K562 (cell line): ENCODE measurements at regions of chr5 and their contacts with region 1.

Region 1: DNA sequence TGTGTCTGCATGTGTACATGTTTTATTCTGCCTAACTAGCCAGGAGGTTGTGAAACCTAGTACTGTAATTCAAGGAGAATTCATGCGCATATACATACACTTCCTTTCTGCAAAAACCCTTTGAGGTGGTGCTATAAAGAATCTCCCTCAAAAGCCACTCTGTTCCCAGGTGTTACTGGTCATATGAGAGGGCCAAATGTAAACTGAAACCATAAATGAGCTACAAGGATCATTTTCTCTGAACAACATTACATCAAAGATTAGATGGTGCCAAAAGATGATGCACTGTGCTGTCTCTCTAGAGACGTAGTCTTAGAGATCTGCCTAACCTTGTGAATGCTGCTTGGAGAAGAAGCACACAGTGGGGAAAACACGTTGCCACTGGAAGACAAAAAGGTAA is 15.7 kb downstream of the NREP start:
- DNase-seq: no peak
- ATAC-seq: no peak
- H3K4me3 ChIP-seq: no peak overlapping the region
- H3K27ac ChIP-seq: no peak overlapping the region
- H3K4me1 ChIP-seq: no peaks in the 10 kb centered on the region
- H3K27me3 ChIP-seq: no peaks in the 10 kb centered on the region
- CTCF ChIP-seq: no peak
- EP300 ChIP-seq: no peak
- POLR2A ChIP-seq: no peak
- RAD21 ChIP-seq: no peak

Region 2: GRCh38 chr5:110909950-110910349 is 831.3 kb before region 1 on chr5:
- CTCF ChIA-PET with region 1: no interaction called
- POLR2A ChIA-PET with region 1: no interaction called
- in situ Hi-C with region 1: no loop called
- intact Hi-C with region 1: no loop called
- DNase-seq: no peak
- ATAC-seq: no peak
- H3K4me3 ChIP-seq: no peak overlapping the region
- H3K27ac ChIP-seq: no peak overlapping the region
- H3K4me1 ChIP-seq: no peaks in the 10 kb centered on the region
- H3K27me3 ChIP-seq: no peaks in the 10 kb centered on the region
- CTCF ChIP-seq: no peak
- EP300 ChIP-seq: no peak
- POLR2A ChIP-seq: no peak
- RAD21 ChIP-seq: no peak

Region 3: DNA sequence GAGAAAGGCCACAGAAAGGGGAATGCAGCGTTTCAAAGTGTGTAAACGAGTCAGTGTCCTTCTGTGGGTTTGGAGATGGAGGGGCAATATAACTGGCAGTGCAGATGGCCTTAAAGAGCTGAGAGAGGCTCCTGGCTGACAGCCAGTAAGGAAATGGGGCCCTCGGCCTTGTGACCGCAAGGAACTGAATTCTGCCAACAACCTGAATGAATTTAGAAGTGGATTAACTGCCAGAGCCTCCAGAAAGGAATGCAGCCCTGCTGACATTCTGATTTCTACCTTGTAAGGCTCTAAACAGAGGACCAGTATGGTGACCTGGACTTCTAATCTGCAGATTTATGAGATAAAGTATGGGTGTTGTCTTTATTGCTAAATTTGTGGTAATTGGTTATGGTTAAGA is 33.2 kb after region 1 on chr5:
- CTCF ChIA-PET with region 1: no interaction called
- POLR2A ChIA-PET with region 1: no interaction called
- in situ Hi-C with region 1: no loop called
- intact Hi-C with region 1: loop called (anchors 2 kb)
- DNase-seq: no peak
- ATAC-seq: no peak
- H3K4me3 ChIP-seq: no peak overlapping the region
- H3K27ac ChIP-seq: no peak overlapping the region
- H3K4me1 ChIP-seq: no peaks in the 10 kb centered on the region
- H3K27me3 ChIP-seq: no peaks in the 10 kb centered on the region
- CTCF ChIP-seq: no peak
- EP300 ChIP-seq: no peak
- POLR2A ChIP-seq: no peak
- RAD21 ChIP-seq: no peak